CD8-positive, alpha-beta memory T cell (primary cell): ENCODE measurements at regions of chr3 and their contacts with region 1.

Region 1: GRCh38 chr3:151227807-151228665 is 25.0 kb upstream of the GPR171 start:
- DNase-seq: peak; percentile 61 to 82 (median 71)
- H3K4me3 ChIP-seq: no peak overlapping the region
- H3K4me3 Mint-ChIP-seq: peak overlapping the region in 4 of 7 donors; percentile 10 to 68 (median 36)
- H3K27ac ChIP-seq: no peak overlapping the region
- H3K27ac Mint-ChIP-seq: peak overlapping the region in 7 of 8 donors; percentile 48 to 98 (median 77)
- H3K4me1 ChIP-seq: peaks cover 34% of the 10 kb centered on the region
- H3K4me1 Mint-ChIP-seq: peaks cover 46 to 66% (median 46%) of the 10 kb centered on the region in 3 donors
- H3K27me3 ChIP-seq: no peaks in the 10 kb centered on the region
- H3K27me3 Mint-ChIP-seq: peaks cover 0 to 2% of the 10 kb centered on the region in 2 donors

Region 2: GRCh38 chr3:151210676-151211381 is 17.2 kb before region 1 on chr3:
- CTCF ChIA-PET with region 1: interaction called, 24 read pairs
- POLR2A ChIA-PET with region 1: no interaction called
- DNase-seq: no peak
- H3K4me3 ChIP-seq: no peak overlapping the region
- H3K4me3 Mint-ChIP-seq: peak overlapping the region in 6 of 7 donors; percentile 44 to 61 (median 56)
- H3K27ac ChIP-seq: no peak overlapping the region
- H3K27ac Mint-ChIP-seq: peak overlapping the region; percentile 26 to 92 (median 80)
- H3K4me1 ChIP-seq: peaks cover 28% of the 10 kb centered on the region
- H3K4me1 Mint-ChIP-seq: peaks cover 37 to 51% (median 50%) of the 10 kb centered on the region in 3 donors
- H3K27me3 ChIP-seq: no peaks in the 10 kb centered on the region
- H3K27me3 Mint-ChIP-seq: no peaks in the 10 kb centered on the region

Region 3: DNA sequence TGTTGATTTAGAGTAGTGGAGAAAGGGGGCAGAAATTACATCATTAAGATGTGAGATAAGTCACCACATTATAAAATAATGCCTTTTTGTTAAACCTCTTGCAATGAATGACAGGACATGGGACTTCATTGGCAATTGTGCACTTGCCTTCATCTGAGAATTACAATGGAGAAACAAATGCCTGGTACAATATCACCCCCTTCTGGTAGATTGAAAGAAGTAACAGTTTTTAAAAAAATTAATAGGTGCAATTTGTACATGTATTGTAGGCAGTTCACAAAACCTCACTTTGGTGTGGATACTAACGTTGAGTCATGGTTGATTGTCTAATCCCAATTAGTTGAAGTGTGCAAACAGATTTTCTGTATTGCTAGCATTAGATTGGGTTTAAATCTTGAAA is 54.9 kb after region 1 on chr3:
- CTCF ChIA-PET with region 1: interaction called, 99 read pairs
- POLR2A ChIA-PET with region 1: interaction called, 10 read pairs
- DNase-seq: peak in 2 of 5 donors; percentile 57 to 63
- H3K4me3 ChIP-seq: no peak overlapping the region
- H3K4me3 Mint-ChIP-seq: peak overlapping the region in 1 of 7 donors; percentile 22
- H3K27ac ChIP-seq: no peak overlapping the region
- H3K27ac Mint-ChIP-seq: peak overlapping the region in 4 of 8 donors; percentile 20 to 75 (median 63)
- H3K4me1 ChIP-seq: peaks cover 12% of the 10 kb centered on the region
- H3K4me1 Mint-ChIP-seq: peaks cover 13 to 33% (median 27%) of the 10 kb centered on the region in 3 donors
- H3K27me3 ChIP-seq: no peaks in the 10 kb centered on the region
- H3K27me3 Mint-ChIP-seq: no peaks in the 10 kb centered on the region

Region 4: GRCh38 chr3:151290673-151291072 is 62.6 kb after region 1 on chr3:
- CTCF ChIA-PET with region 1: interaction called, 13 read pairs
- POLR2A ChIA-PET with region 1: interaction called, 10 read pairs
- DNase-seq: no peak
- H3K4me3 ChIP-seq: no peak overlapping the region
- H3K4me3 Mint-ChIP-seq: no peak overlapping the region
- H3K27ac ChIP-seq: no peak overlapping the region
- H3K27ac Mint-ChIP-seq: no peak overlapping the region
- H3K4me1 ChIP-seq: no peaks in the 10 kb centered on the region
- H3K4me1 Mint-ChIP-seq: no peaks in the 10 kb centered on the region
- H3K27me3 ChIP-seq: no peaks in the 10 kb centered on the region
- H3K27me3 Mint-ChIP-seq: peaks cover 4 to 24% of the 10 kb centered on the region in 2 donors

Region 5: GRCh38 chr3:151733613-151734012 is 505.6 kb after region 1 on chr3 and contains the start of gene AADACL2:
- CTCF ChIA-PET with region 1: no interaction called
- POLR2A ChIA-PET with region 1: no interaction called
- DNase-seq: no peak
- H3K4me3 ChIP-seq: no peak within 1 kb of the TSS
- H3K4me3 Mint-ChIP-seq: no peak within 1 kb of the TSS
- H3K27ac ChIP-seq: no peak within 1 kb of the TSS
- H3K27ac Mint-ChIP-seq: peak within 1 kb of the TSS in 1 of 8 donors; percentile 21
- H3K4me1 ChIP-seq: no peaks in the 10 kb centered on the region
- H3K4me1 Mint-ChIP-seq: no peaks in the 10 kb centered on the region
- H3K27me3 ChIP-seq: no peaks in the 10 kb centered on the region
- H3K27me3 Mint-ChIP-seq: peaks cover 6 to 25% of the 10 kb centered on the region in 2 donors
- total RNA-seq, gene AADACL2: not detected